Calu3 (cell line): ENCODE measurements at regions of chr10 and their contacts with region 1.

Region 1: DNA sequence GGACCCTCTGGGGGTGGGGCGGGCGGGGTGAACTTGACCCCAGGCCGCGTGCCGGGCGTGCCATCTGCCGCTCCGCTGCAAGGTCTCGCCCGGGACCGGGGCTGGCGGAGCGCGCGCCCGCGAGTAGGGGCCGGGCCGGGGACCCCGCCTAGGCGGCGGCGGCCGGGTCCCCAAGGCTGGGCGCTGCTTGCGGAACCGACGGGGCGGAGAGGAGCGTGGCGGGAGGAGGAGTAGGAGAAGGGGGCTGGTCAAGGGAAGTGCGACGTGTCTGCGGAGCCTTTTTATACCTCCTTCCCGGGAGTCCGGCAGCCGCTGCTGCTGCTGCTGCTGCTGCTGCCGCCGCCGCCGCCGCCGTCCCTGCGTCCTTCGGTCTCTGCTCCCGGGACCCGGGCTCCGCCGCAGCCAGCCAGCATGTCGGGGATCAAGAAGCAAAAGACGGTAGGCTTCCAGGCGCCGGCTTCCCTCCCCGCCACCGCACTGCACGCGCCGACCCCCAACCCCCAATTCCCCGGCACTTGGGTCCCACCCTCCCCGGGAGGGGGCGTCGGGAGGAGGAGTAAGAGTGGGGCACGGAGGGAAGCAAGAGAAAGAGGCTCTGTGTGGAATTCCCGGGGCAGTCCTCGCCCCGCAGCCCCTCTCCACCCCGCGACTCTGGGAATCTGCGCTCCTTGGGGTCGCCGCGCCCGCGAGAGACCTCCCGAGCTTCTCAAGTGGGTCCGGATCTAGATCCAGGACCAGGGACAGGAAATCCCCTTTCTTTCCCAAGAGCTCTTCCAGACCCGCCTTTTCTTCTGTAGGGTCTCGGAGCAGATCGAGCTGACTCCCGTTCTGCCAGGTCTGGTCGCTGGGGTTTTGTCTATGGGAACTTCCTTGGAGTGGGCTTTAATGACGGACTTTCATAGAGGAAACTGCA is at the start of gene PAPSS2:
- DNase-seq: peak; percentile 46
- H3K4me3 Mint-ChIP-seq: peak within 1 kb of the TSS; percentile 83
- H3K27ac Mint-ChIP-seq: peak within 1 kb of the TSS; percentile 61
- H3K4me1 Mint-ChIP-seq: peaks cover 31% of the 10 kb centered on the region
- H3K27me3 Mint-ChIP-seq: no peaks in the 10 kb centered on the region
- CTCF ChIP-seq: no peak
- total RNA-seq, gene PAPSS2: 12.6 and 12.7 TPM in 2 replicates

Region 2: GRCh38 chr10:87531908-87532622 is 127.8 kb before region 1 on chr10:
- CTCF ChIA-PET with region 1: interaction called, 4 read pairs
- intact Hi-C with region 1: loop called (anchors 5 kb)
- DNase-seq: no peak
- H3K4me3 Mint-ChIP-seq: no peak overlapping the region
- H3K27ac Mint-ChIP-seq: no peak overlapping the region
- H3K4me1 Mint-ChIP-seq: no peaks in the 10 kb centered on the region
- H3K27me3 Mint-ChIP-seq: no peaks in the 10 kb centered on the region
- CTCF ChIP-seq: no peak

Region 3: DNA sequence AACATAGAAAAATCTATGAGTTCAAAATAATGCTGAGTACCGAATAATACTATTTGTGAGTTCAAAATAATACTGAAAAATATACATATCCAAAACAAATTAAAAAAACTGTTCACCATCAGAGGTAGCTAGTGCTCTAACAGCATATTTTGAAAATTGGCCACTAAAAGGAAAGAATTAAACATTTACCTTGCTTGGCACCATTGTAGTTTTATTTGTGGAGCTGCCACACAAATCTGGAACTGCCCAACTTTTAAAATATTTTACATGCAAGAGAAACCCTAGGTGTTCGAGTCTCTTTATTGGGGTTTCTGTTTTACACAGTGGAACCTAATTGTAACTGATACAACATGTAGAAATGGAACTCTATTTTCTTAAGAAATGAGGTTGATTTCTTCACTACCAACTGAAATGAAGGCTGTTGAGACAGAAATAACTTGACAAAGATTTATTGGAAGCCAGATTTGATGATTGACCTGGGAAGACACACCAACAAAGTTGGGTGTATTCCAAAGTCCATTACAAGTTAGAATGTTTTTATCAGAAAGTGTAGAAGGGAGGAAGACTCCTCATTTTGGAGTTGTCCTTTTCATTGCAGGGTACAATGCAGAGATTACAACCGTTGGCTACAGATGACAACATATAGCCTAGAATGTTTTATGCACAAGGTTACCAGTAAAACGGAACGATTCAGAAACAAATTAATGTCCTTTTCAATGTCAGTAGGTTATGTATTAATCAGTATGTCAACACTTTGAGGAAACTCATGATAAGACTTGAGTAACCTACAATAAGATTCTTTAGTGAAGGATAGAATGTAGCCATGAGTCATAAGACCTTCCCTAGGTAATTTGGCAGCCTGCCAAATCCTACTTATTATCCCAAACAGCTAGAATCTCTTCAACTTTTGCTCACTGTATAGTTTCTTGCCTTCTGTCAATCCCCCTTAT is 74.0 kb before region 1 on chr10:
- CTCF ChIA-PET with region 1: no interaction called
- intact Hi-C with region 1: loop called (anchors 5 kb)
- DNase-seq: peak; percentile 41
- H3K4me3 Mint-ChIP-seq: no peak overlapping the region
- H3K27ac Mint-ChIP-seq: peak overlapping the region; percentile 44
- H3K4me1 Mint-ChIP-seq: peaks cover 36% of the 10 kb centered on the region
- H3K27me3 Mint-ChIP-seq: no peaks in the 10 kb centered on the region
- CTCF ChIP-seq: no peak

Region 4: DNA sequence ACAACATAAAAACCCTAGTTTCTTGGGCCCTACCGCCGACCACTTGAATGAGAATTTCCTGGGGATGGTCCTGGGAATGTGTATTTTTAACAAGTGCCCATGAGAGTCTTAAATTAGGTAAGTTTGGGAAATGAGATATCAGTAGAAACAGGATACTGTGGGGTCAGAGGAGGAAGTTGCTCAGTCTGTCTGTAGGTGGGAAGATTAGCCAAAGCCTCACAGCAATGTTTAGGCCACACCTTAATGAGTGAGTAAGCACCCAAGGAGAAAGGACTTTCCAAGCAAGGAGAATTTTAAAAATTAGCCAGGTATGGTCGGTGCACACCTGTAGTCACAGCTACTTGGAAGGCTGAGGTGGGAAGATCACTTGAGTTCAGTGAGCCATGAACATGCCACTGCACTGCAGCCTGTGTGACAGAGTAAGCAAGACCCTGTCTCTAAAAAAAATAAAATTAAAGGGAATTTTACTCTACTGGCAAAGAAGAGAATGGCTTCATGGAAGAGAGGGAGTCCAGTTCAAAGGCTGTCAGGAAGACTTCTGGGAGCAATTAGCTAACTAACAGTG is 31.8 kb after region 1 on chr10:
- CTCF ChIA-PET with region 1: no interaction called
- intact Hi-C with region 1: loop called (anchors 5 kb)
- DNase-seq: peak; percentile 15
- H3K4me3 Mint-ChIP-seq: no peak overlapping the region
- H3K27ac Mint-ChIP-seq: no peak overlapping the region
- H3K4me1 Mint-ChIP-seq: no peaks in the 10 kb centered on the region
- H3K27me3 Mint-ChIP-seq: no peaks in the 10 kb centered on the region
- CTCF ChIP-seq: no peak

Region 5: GRCh38 chr10:87734987-87735827 is 75.4 kb after region 1 on chr10:
- CTCF ChIA-PET with region 1: interaction called, 5 read pairs
- intact Hi-C with region 1: loop called (anchors 1 kb)
- DNase-seq: peak; percentile 20
- H3K4me3 Mint-ChIP-seq: no peak overlapping the region
- H3K27ac Mint-ChIP-seq: no peak overlapping the region
- H3K4me1 Mint-ChIP-seq: peaks cover 6% of the 10 kb centered on the region
- H3K27me3 Mint-ChIP-seq: no peaks in the 10 kb centered on the region
- CTCF ChIP-seq: peak; percentile 55

Region 6: GRCh38 chr10:87771871-87772500 is 112.2 kb after region 1 on chr10:
- CTCF ChIA-PET with region 1: no interaction called
- intact Hi-C with region 1: loop called (anchors 2 kb)
- DNase-seq: no peak
- H3K4me3 Mint-ChIP-seq: no peak overlapping the region
- H3K27ac Mint-ChIP-seq: no peak overlapping the region
- H3K4me1 Mint-ChIP-seq: peaks cover 6% of the 10 kb centered on the region
- H3K27me3 Mint-ChIP-seq: no peaks in the 10 kb centered on the region
- CTCF ChIP-seq: peak; percentile 16